MCF 10A (cell line): ENCODE measurements at regions of chr14 and their contacts with region 1.

Region 1: GRCh38 chr14:64005822-64006221 is 153.0 kb downstream of the SYNE2 start:
- DNase-seq: no peak
- H3K4me3 Mint-ChIP-seq: no peak overlapping the region
- H3K27ac Mint-ChIP-seq: no peak overlapping the region
- H3K4me1 Mint-ChIP-seq: no peaks in the 10 kb centered on the region
- H3K27me3 Mint-ChIP-seq: no peaks in the 10 kb centered on the region
- CTCF ChIP-seq: no peak

Region 2: GRCh38 chr14:64123241-64123822 is 117.5 kb after region 1 on chr14:
- CTCF ChIA-PET with region 1: interaction called, 10 read pairs
- POLR2A ChIA-PET with region 1: interaction called, 4 read pairs
- intact Hi-C with region 1: loop called (anchors 1 kb)
- DNase-seq: no peak
- H3K4me3 Mint-ChIP-seq: no peak overlapping the region
- H3K27ac Mint-ChIP-seq: no peak overlapping the region
- H3K4me1 Mint-ChIP-seq: peaks cover 15% of the 10 kb centered on the region
- H3K27me3 Mint-ChIP-seq: no peaks in the 10 kb centered on the region
- CTCF ChIP-seq: no peak